ENCODE measurements at regions of chr12 and their contacts with region 1.

Region 1: GRCh38 chr12:68364893-68365725 is 32.9 kb upstream of the MDM1 start:
- DNase-seq: peak; percentile 91
- ATAC-seq: peak; percentile 92
- H3K4me3 Mint-ChIP-seq: peak overlapping the region; percentile 74
- H3K27ac Mint-ChIP-seq: peak overlapping the region; percentile 96
- H3K4me1 Mint-ChIP-seq: peaks cover 64% of the 10 kb centered on the region
- H3K27me3 Mint-ChIP-seq: no peaks in the 10 kb centered on the region

Region 2: GRCh38 chr12:68331869-68332727 is 33.0 kb before region 1 on chr12 and contains the start of gene MDM1:
- CTCF ChIA-PET with region 1: no interaction called
- POLR2A ChIA-PET with region 1: no interaction called
- intact Hi-C with region 1: loop called in 1 of 2 experiments (anchors 1 kb)
- DNase-seq: peak; percentile 97
- ATAC-seq: peak; percentile 98
- H3K4me3 Mint-ChIP-seq: peak within 1 kb of the TSS; percentile 80
- H3K27ac Mint-ChIP-seq: peak within 1 kb of the TSS; percentile 55
- H3K4me1 Mint-ChIP-seq: peaks cover 42% of the 10 kb centered on the region
- H3K27me3 Mint-ChIP-seq: peaks cover 2% of the 10 kb centered on the region
- total RNA-seq, gene MDM1: 12.7 to 13.6 TPM

Region 3: DNA sequence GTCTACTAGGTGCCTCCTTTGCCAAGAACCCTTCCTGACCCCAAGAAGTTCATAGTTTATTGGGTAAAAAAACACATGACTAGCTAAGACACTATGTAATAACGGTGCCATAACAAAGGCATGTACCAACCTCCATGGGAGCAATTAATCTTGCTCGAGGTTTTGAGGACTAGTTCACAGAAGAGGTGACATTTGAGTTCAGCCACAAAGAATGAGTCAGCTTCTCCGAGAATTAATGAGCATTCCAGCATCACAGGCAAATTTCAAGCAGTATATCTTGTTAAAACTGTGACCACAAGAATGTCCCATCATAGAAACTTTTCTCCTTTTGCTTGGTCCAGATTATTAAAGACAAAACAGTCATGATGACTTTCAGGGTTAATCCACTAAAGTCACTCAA is 132.6 kb after region 1 on chr12:
- CTCF ChIA-PET with region 1: no interaction called
- POLR2A ChIA-PET with region 1: no interaction called
- intact Hi-C with region 1: loop called (anchors 1 to 2 kb)
- DNase-seq: peak; percentile 27
- ATAC-seq: peak; percentile 78
- H3K4me3 Mint-ChIP-seq: peak overlapping the region; percentile 53
- H3K27ac Mint-ChIP-seq: peak overlapping the region; percentile 86
- H3K4me1 Mint-ChIP-seq: peaks cover 37% of the 10 kb centered on the region
- H3K27me3 Mint-ChIP-seq: peaks cover 2% of the 10 kb centered on the region

Region 4: DNA sequence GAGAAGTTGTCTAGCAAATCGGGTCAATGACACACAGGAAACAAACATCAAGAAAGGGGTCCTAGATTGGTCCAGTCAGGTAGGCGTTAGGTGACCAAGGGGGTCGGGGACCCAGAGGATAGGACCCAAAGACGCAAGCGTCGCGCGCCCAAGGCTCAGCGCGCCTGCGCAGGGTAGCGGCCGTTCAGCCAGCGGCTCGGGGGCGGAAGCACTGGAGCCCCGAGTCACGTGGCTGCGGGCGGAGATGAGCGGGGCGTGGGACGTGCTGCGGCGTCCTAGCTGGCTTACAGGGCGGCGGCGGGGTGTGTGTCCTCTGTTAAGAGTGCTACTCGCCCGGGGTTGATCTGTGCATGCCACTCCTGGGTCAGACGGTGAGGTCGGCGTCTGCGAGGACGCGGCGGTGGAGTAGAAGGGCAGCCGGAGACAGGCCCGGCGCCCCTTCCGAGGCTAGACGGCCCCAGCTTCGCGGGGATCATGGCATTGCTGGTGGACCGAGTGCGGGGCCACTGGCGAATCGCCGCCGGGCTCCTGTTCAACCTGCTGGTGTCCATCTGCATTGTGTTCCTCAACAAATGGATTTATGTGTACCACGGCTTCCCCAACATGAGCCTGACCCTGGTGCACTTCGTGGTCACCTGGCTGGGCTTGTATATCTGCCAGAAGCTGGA is 380.9 kb after region 1 on chr12 and contains the start of gene SLC35E3:
- CTCF ChIA-PET with region 1: no interaction called
- POLR2A ChIA-PET with region 1: no interaction called
- intact Hi-C with region 1: loop called in 1 of 2 experiments (anchors 2 kb)
- DNase-seq: peak; percentile 96
- ATAC-seq: peak; percentile 97
- H3K4me3 Mint-ChIP-seq: peak within 1 kb of the TSS; percentile 87
- H3K27ac Mint-ChIP-seq: peak within 1 kb of the TSS; percentile 92
- H3K4me1 Mint-ChIP-seq: peaks cover 16% of the 10 kb centered on the region
- H3K27me3 Mint-ChIP-seq: no peaks in the 10 kb centered on the region
- total RNA-seq, gene SLC35E3: 3.5 to 5.1 TPM

Region 5: DNA sequence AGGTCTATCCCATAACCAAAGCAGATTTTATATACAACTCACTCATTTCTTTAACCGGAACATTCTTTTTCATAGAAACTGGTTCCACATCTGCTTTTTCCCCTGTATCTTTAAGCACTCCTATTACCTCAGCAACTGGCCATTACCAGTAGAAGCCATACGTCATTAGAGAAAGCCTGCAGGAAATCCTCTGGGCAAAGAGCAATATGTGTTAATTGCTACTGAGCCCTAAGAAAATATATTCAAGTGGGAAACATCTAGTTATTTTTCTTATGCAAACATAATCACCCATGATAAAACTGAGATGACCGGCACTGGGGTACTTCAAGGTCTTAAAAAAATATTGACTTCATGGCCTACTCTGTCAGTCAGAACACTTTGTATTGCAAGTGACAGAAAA is 846.1 kb after region 1 on chr12:
- CTCF ChIA-PET with region 1: no interaction called
- POLR2A ChIA-PET with region 1: no interaction called
- intact Hi-C with region 1: no loop called
- DNase-seq: no peak
- ATAC-seq: no peak
- H3K4me3 Mint-ChIP-seq: no peak overlapping the region
- H3K27ac Mint-ChIP-seq: no peak overlapping the region
- H3K4me1 Mint-ChIP-seq: peaks cover 2% of the 10 kb centered on the region
- H3K27me3 Mint-ChIP-seq: no peaks in the 10 kb centered on the region

Region 6: GRCh38 chr12:69527506-69528272 is 1162.6 kb after region 1 on chr12:
- CTCF ChIA-PET with region 1: no interaction called
- POLR2A ChIA-PET with region 1: no interaction called
- intact Hi-C with region 1: loop called in 1 of 2 experiments (anchors 5 kb)
- DNase-seq: no peak
- ATAC-seq: peak; percentile 62
- H3K4me3 Mint-ChIP-seq: no peak overlapping the region
- H3K27ac Mint-ChIP-seq: peak overlapping the region; percentile 8
- H3K4me1 Mint-ChIP-seq: peaks cover 47% of the 10 kb centered on the region
- H3K27me3 Mint-ChIP-seq: no peaks in the 10 kb centered on the region

Measured in activated CD4-positive, alpha-beta T cell treated with anti-CD3 and anti-CD28 coated beads for 36 hours (primary cell).